ENCODE measurements at regions of chr17 and their contacts with region 1.

Region 1: DNA sequence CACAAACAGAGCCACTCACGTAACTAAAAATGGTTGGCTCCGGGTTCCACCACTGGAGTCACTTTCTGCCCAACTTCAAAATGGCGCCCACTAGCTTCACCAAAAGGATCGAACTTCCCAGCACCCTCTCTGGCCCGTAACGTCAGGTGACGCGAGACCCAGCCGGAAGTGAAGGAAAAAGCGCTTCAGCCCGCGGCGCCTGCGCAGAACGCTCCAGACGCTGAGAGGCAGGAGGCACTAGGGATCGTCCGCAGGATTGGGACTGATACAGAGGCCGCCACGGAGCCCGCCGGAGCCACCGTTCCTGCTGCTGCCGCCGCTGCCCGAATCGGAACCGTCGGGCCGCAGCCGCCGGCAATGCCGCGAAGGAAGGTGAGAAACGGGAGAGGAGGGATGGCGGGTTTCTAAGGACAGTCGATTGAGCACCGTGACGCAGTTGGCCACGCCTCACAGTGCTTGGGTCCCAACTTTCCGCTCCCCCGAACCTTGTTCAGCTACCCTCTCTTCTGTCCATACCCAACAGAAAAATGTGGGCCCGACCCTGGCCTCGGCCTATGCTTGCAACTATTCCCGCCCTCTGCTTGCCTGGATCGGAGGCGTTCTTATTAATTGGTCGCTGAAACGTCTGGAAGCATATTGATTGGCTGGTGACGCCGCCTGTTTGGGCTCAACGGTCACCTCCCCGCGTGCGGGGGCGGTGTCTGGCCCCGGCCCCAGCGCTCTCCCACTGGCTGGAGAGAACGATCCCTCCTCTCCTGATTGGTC is at the start of gene KAT7:
- DNase-seq: peak; percentile 100
- H3K4me3 ChIP-seq: peak within 1 kb of the TSS; percentile 79 to 99 (median 96)
- H3K27ac ChIP-seq: peak within 1 kb of the TSS; percentile 97 to 98
- H3K4me1 ChIP-seq: peaks cover 9 to 34% (median 23%) of the 10 kb centered on the region in 4 experiments
- H3K27me3 ChIP-seq: no peaks in the 10 kb centered on the region

Region 2: GRCh38 chr17:49739641-49740271 is 48.9 kb before region 1 on chr17:
- CTCF ChIA-PET with region 1: no interaction called
- POLR2A ChIA-PET with region 1: interaction called, 10 read pairs
- DNase-seq: peak; percentile 99 to 100 (median 100)
- H3K4me3 ChIP-seq: peak overlapping the region in 6 of 7 experiments; percentile 20 to 64 (median 54)
- H3K27ac ChIP-seq: peak overlapping the region; percentile 91 to 95
- H3K4me1 ChIP-seq: peaks cover 60 to 86% (median 77%) of the 10 kb centered on the region in 4 experiments
- H3K27me3 ChIP-seq: no peaks in the 10 kb centered on the region

Region 3: GRCh38 chr17:49748791-49749190 is 39.9 kb before region 1 on chr17:
- CTCF ChIA-PET with region 1: interaction called, 3 read pairs
- POLR2A ChIA-PET with region 1: interaction called, 10 read pairs
- DNase-seq: peak in 2 of 3 donors; percentile 79 to 90
- H3K4me3 ChIP-seq: peak overlapping the region in 1 of 7 experiments; percentile 6
- H3K27ac ChIP-seq: peak overlapping the region; percentile 35 to 78
- H3K4me1 ChIP-seq: peaks cover 46 to 93% (median 68%) of the 10 kb centered on the region in 4 experiments
- H3K27me3 ChIP-seq: no peaks in the 10 kb centered on the region

Measured in common myeloid progenitor, CD34-positive (primary cell).